Endothelial cell of umbilical vein (primary cell): ENCODE measurements at regions of chr10 and their contacts with region 1.

Region 1: GRCh38 chr10:103592186-103593021 is 98.9 kb downstream of the NEURL1 start:
- DNase-seq: peak; percentile 40
- H3K4me3 ChIP-seq: no peak overlapping the region
- H3K27ac ChIP-seq: no peak overlapping the region
- H3K4me1 ChIP-seq: peaks cover 4% of the 10 kb centered on the region
- H3K27me3 ChIP-seq: no peaks in the 10 kb centered on the region
- CTCF ChIP-seq: peak; percentile 73 to 91
- POLR2A ChIP-seq: no peak

Region 2: DNA sequence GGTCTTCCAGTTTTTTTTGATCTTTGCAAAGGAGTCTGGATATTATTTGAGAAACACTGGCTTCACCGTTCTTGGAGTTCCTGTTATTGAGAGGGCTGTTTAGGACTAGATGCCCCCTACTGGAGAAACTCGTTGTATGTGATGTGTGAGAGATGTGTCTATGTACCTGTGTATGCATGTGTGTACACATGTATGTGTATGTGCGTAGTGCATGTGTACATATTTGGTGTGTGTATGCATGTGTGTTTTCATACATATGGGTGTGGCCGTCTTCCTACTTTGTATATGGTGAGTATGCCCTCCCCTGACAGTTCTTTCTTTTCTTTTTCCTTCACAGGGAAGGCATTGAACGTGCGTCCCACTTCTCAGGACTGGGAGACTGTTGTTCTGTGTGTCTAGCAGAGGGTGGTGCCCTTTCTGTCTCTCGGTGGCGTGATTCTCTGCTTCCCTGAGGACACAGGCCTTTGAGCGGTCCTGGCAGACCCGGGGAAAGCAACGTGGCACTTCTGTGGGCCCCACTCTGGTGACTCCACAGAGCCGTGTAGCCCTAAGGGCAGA is 110.4 kb before region 1 on chr10:
- CTCF ChIA-PET with region 1: interaction called, 4 read pairs
- POLR2A ChIA-PET with region 1: no interaction called
- dilution Hi-C with region 1: no loop called
- intact Hi-C with region 1: loop called (anchors 5 kb)
- DNase-seq: peak; percentile 72
- H3K4me3 ChIP-seq: no peak overlapping the region
- H3K27ac ChIP-seq: no peak overlapping the region
- H3K4me1 ChIP-seq: no peaks in the 10 kb centered on the region
- H3K27me3 ChIP-seq: no peaks in the 10 kb centered on the region
- CTCF ChIP-seq: peak; percentile 49 to 69
- POLR2A ChIP-seq: no peak

Region 3: GRCh38 chr10:103542764-103543616 is 49.4 kb before region 1 on chr10:
- CTCF ChIA-PET with region 1: interaction called, 14 read pairs
- POLR2A ChIA-PET with region 1: no interaction called
- dilution Hi-C with region 1: no loop called
- intact Hi-C with region 1: no loop called
- DNase-seq: peak; percentile 66
- H3K4me3 ChIP-seq: peak overlapping the region in 1 of 3 experiments; percentile 39
- H3K27ac ChIP-seq: no peak overlapping the region
- H3K4me1 ChIP-seq: peaks cover 4% of the 10 kb centered on the region
- H3K27me3 ChIP-seq: peaks cover 5 to 7% of the 10 kb centered on the region in 2 experiments
- CTCF ChIP-seq: peak; percentile 49 to 56
- POLR2A ChIP-seq: no peak

Region 4: GRCh38 chr10:103576862-103577261 is 15.5 kb before region 1 on chr10:
- CTCF ChIA-PET with region 1: interaction called, 10 read pairs
- POLR2A ChIA-PET with region 1: no interaction called
- dilution Hi-C with region 1: no loop called
- intact Hi-C with region 1: no loop called
- DNase-seq: no peak
- H3K4me3 ChIP-seq: no peak overlapping the region
- H3K27ac ChIP-seq: no peak overlapping the region
- H3K4me1 ChIP-seq: no peaks in the 10 kb centered on the region
- H3K27me3 ChIP-seq: peaks cover 13 to 16% of the 10 kb centered on the region in 2 experiments
- CTCF ChIP-seq: no peak
- POLR2A ChIP-seq: no peak

Region 5: GRCh38 chr10:104501864-104502579 is 909.6 kb after region 1 on chr10:
- CTCF ChIA-PET with region 1: no interaction called
- POLR2A ChIA-PET with region 1: no interaction called
- dilution Hi-C with region 1: no loop called
- intact Hi-C with region 1: no loop called
- DNase-seq: no peak
- H3K4me3 ChIP-seq: no peak overlapping the region
- H3K27ac ChIP-seq: no peak overlapping the region
- H3K4me1 ChIP-seq: no peaks in the 10 kb centered on the region
- H3K27me3 ChIP-seq: no peaks in the 10 kb centered on the region
- CTCF ChIP-seq: no peak
- POLR2A ChIP-seq: no peak